ENCODE measurements at regions of chr1 and their contacts with region 1.

Region 1: GRCh38 chr1:46303038-46303871 is at the starts of genes LRRC41 and UQCRH:
- DNase-seq: peak; percentile 96
- H3K4me3 ChIP-seq: peak within 1 kb of the TSS; percentile 62
- H3K27ac ChIP-seq: peak within 1 kb of the TSS; percentile 97
- H3K4me1 ChIP-seq: peaks cover 25% of the 10 kb centered on the region
- H3K27me3 ChIP-seq: no peaks in the 10 kb centered on the region
- CTCF ChIP-seq: 0 out of 2 replicates have a peak, but pooled peaks have one; percentile 24
- total RNA-seq, gene LRRC41: 78.9 and 79.1 TPM in 2 replicates
- total RNA-seq, gene UQCRH: 527 and 567 TPM in 2 replicates

Region 2: GRCh38 chr1:46340404-46341221 is 37.4 kb after region 1 on chr1 and contains the start of gene NSUN4:
- CTCF ChIA-PET with region 1: no interaction called
- POLR2A ChIA-PET with region 1: interaction called, 5 read pairs
- intact Hi-C with region 1: loop called (anchors 2 kb)
- DNase-seq: peak; percentile 98
- H3K4me3 ChIP-seq: peak within 1 kb of the TSS; percentile 58
- H3K27ac ChIP-seq: peak within 1 kb of the TSS; percentile 92
- H3K4me1 ChIP-seq: peaks cover 6% of the 10 kb centered on the region
- H3K27me3 ChIP-seq: no peaks in the 10 kb centered on the region
- CTCF ChIP-seq: peak; percentile 84
- total RNA-seq, gene NSUN4: 30.7 and 31.7 TPM in 2 replicates

Region 3: DNA sequence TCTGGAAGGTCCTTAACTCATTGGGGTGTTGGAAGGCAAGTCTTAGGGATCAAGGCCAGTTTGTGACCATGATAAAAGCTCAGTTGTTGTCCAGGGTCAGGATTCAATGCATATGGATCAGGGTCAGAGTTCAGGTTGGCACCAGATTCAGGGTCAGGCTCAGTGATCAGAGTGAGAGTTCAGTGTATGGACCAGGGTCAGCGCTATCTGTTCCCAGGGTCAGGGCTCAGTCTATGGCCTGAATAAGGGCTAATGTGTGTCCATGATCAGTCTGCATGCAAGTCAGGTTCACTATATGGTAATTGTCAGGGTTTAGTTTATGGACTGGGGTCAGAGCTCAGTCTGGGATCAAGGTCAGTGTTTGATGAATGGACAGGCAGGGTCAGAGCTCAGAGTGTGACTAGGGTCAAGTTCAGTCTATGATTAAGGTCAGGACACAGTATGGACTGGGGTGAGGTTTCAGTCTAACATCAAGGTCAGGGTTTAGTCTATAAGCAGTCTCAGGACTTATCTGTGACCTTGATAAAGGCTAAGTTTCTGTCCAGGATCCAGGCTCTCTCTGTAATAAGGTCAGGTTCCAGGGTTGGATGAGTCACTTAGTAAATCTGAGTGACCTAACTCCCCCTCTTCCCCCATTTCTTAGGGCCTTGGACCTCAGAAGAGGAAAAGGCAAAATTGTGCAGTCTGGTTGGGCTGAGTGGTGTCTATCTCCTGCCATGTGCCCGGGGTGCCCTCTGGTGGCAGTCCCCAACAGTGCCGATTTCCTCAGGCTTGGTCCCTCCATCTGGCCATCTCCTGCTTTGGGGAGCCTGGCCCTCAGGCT is 224.4 kb after region 1 on chr1:
- CTCF ChIA-PET with region 1: no interaction called
- POLR2A ChIA-PET with region 1: no interaction called
- intact Hi-C with region 1: no loop called
- DNase-seq: peak; percentile 83
- H3K4me3 ChIP-seq: no peak overlapping the region
- H3K27ac ChIP-seq: no peak overlapping the region
- H3K4me1 ChIP-seq: peaks cover 40% of the 10 kb centered on the region
- H3K27me3 ChIP-seq: peaks cover 18% of the 10 kb centered on the region
- CTCF ChIP-seq: peak; percentile 95